ENCODE measurements at regions of chr4 and their contacts with region 1.

Region 1: GRCh38 chr4:123340381-123340701 is 56.3 kb upstream of the SPRY1 start:
- DNase-seq: no peak
- ATAC-seq: peak; percentile 19 to 87

Region 2: GRCh38 chr4:121675715-121676114 is 1664.6 kb before region 1 on chr4:
- intact Hi-C with region 1: no loop called
- DNase-seq: no peak
- ATAC-seq: peak; percentile 54 to 80

Region 3: DNA sequence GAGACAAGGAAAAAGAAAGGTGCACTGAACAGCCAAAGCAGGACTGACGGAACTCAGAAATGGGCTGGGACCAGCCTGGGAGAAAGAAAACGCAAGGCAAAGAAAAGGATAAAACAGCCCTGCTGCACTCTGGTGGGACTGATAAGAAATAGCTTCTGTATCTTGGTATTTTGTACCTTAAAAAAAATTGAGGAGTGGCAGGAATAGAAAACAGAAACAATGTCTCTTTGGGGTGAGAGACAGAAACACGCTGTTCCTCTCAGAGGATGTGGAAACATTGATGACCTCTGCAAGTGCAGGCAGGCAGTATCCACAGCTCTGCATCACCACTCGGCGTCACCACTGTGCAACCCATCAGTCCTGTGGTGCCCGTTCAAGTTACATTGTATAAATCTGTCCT is 96.2 kb before region 1 on chr4:
- intact Hi-C with region 1: loop called in 1 of 2 experiments (anchors 10 kb)
- DNase-seq: peak; percentile 62
- ATAC-seq: peak; percentile 85 to 90

Measured in left cardiac atrium (tissue), 4 donors.